OCI-LY7 (cell line): ENCODE measurements at regions of chr16 and their contacts with region 1.

Region 1: GRCh38 chr16:30984669-30985400 is at the start of gene HSD3B7:
- DNase-seq: peak; percentile 69
- H3K4me3 ChIP-seq: no peak within 1 kb of the TSS
- H3K27ac ChIP-seq: no peak within 1 kb of the TSS
- H3K4me1 ChIP-seq: no peaks in the 10 kb centered on the region
- CTCF ChIP-seq: peak; percentile 88
- total RNA-seq, gene HSD3B7: 1.9 and 3.3 TPM in 2 replicates

Region 2: DNA sequence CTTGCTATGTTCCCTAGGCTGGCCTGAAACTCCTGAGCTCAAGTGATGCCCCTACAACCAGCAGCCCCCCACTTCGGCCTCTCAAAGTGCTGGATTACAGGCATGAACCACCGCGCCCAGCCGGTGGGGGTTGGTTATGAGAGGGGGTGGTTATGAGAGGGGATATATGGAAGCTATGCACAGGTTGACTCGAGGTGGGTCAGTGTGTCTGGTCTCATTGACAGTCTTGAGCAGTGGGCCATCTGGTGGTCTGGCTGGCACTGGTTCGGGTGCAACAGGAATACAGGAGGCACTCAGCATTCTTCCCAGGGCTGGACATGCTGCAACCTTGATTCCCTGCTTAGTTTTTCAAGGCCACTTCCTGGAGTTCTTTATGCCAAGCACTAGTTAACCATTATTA is 31.2 kb after region 1 on chr16:
- CTCF ChIA-PET with region 1: no interaction called
- POLR2A ChIA-PET with region 1: no interaction called
- intact Hi-C with region 1: no loop called
- DNase-seq: peak; percentile 19
- H3K4me3 ChIP-seq: no peak overlapping the region
- H3K27ac ChIP-seq: no peak overlapping the region
- H3K4me1 ChIP-seq: no peaks in the 10 kb centered on the region
- CTCF ChIP-seq: peak; percentile 41

Region 3: GRCh38 chr16:31094424-31095120 is 109.7 kb after region 1 on chr16 and contains the start of gene VKORC1:
- CTCF ChIA-PET with region 1: interaction called, 3 read pairs
- POLR2A ChIA-PET with region 1: no interaction called
- intact Hi-C with region 1: loop called (anchors 1 kb)
- DNase-seq: peak; percentile 92
- H3K4me3 ChIP-seq: peak within 1 kb of the TSS; percentile 86
- H3K27ac ChIP-seq: peak within 1 kb of the TSS; percentile 71
- H3K4me1 ChIP-seq: peaks cover 18% of the 10 kb centered on the region
- CTCF ChIP-seq: no peak
- total RNA-seq, gene VKORC1: 68.8 and 69.3 TPM in 2 replicates

Region 4: DNA sequence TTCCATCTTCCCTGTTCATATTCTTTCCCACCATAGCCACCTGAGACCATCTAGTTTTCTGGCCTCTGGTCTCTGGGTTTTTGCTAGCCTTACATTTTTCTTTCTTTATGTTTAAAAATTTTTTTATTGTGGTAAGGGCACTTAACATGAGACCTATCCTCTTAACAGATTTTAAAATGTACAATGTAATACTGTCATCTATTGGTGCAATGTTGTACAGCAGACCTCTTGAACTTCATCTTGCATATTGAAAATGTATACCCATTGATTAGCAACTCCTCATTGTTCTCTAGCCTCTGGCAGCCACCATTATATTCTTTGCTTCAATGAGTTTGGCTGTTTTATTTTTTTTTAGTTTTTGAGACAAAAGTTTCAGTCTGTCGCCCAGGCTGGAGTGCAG is 314.1 kb after region 1 on chr16:
- CTCF ChIA-PET with region 1: no interaction called
- POLR2A ChIA-PET with region 1: no interaction called
- intact Hi-C with region 1: loop called (anchors 10 kb)
- DNase-seq: peak; percentile 12
- H3K4me3 ChIP-seq: no peak overlapping the region
- H3K27ac ChIP-seq: no peak overlapping the region
- H3K4me1 ChIP-seq: no peaks in the 10 kb centered on the region
- CTCF ChIP-seq: peak; percentile 76

Region 5: DNA sequence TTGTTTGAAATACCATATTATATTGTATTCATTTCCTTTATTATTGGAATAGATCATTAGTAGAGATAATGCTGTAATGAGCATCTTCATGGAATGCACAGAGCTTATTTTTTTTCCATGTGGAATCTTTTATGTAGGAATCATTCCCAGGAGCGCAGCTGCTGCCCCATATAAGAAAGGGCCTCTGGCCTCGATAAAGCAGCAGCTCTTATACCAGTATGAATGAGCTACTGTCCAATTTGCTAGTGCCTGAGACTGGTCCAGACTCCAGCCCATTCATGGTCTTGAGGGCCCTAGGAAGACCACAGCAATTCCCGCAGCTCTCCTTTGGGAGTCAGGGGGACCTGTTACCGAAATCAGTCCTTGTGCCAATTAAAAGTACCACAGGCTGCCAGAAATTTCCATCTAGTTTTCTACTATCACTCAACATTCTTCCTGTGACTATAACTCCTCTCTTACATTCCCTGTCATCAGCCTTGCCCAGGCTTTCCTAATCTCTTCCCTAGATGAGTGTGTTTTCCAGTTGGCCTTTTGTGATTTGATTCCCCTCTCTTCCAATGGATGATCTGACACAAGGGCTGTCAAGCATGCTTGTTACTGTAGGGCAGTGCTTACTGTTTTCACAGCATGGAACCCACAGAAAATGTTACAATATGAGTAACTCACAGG is 455.8 kb after region 1 on chr16:
- CTCF ChIA-PET with region 1: no interaction called
- POLR2A ChIA-PET with region 1: no interaction called
- intact Hi-C with region 1: loop called (anchors 5 kb)
- DNase-seq: no peak
- H3K4me3 ChIP-seq: no peak overlapping the region
- H3K27ac ChIP-seq: no peak overlapping the region
- H3K4me1 ChIP-seq: peaks cover 23% of the 10 kb centered on the region
- CTCF ChIP-seq: no peak

Region 6: GRCh38 chr16:31513126-31513525 is 528.3 kb after region 1 on chr16:
- CTCF ChIA-PET with region 1: no interaction called
- POLR2A ChIA-PET with region 1: no interaction called
- intact Hi-C with region 1: no loop called
- DNase-seq: no peak
- H3K4me3 ChIP-seq: no peak overlapping the region
- H3K27ac ChIP-seq: no peak overlapping the region
- H3K4me1 ChIP-seq: peaks cover 9% of the 10 kb centered on the region
- CTCF ChIP-seq: no peak